Adrenal gland (tissue), 19 donors: ENCODE measurements at regions of chr12 and their contacts with region 1.

Region 1: GRCh38 chr12:1650260-1650977 is 21.4 kb downstream of the WNT5B start:
- DNase-seq: no peak
- H3K4me3 ChIP-seq: no peak overlapping the region
- H3K27ac ChIP-seq: peak overlapping the region in 3 of 5 donors; percentile 40 to 63 (median 51)
- H3K4me1 ChIP-seq: peaks cover 8 to 13% of the 10 kb centered on the region in 2 donors
- H3K27me3 ChIP-seq: no peaks in the 10 kb centered on the region
- CTCF ChIP-seq: no peak
- POLR2A ChIP-seq: no peak

Region 2: DNA sequence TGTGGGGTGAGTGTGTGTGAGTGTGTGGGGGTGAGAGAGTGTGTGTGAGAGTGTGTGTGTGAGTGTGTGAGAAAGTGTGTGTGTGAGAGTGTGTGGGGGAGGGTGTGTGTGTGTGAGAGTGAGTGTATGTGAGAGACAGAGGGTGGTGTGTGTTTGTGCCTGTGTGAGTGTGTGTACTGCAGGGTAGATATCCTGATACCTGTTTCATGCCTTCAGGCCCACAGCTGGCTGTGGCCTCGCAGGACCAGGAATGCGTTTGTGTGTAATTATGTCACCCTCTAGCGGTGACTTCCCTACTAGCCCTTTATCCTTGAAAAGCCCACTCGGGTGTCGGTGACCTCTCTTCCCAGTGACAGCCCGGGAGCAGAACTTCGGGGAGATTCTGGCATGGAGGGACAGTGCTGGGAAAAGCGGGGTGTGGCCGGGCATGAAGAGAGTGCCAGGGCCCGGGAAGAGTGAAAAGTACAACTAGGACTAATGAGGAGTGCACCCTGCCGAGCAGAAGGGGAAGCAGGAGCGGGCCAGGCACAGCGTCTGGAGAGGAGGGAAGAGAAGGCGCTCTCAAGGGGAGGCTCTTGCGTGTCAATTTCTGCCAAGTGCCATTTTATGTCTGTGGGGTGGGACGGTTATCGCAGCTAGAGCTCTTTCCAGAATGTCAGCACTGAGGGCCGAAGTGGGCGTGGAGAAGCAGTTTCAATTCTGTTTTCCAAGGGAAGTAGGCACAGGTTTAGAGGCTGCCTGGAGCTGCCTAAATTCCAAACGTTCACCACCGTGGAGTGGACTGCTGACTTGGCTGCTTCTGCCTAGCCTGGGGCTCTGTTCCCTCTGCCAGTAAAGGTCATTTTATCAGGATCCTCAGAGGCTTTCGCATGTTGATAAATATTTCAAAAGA is 45.0 kb before region 1 on chr12:
- intact Hi-C with region 1: no loop called
- DNase-seq: peak; percentile 80 to 92 (median 85)
- H3K4me3 ChIP-seq: peak overlapping the region in 3 of 4 donors; percentile 24 to 56 (median 54)
- H3K27ac ChIP-seq: peak overlapping the region; percentile 81 to 97 (median 92)
- H3K4me1 ChIP-seq: peaks cover 8 to 21% of the 10 kb centered on the region in 2 donors
- H3K27me3 ChIP-seq: no peaks in the 10 kb centered on the region
- CTCF ChIP-seq: peak; percentile 69 to 90 (median 84)
- POLR2A ChIP-seq: no peak

Region 3: GRCh38 chr12:1690578-1691122 is 40.2 kb after region 1 on chr12 and contains the start of gene ADIPOR2:
- intact Hi-C with region 1: loop called in 1 of 2 experiments (anchors 5 kb)
- DNase-seq: peak; percentile 94 to 98 (median 96)
- H3K4me3 ChIP-seq: peak within 1 kb of the TSS; percentile 40 to 99 (median 78)
- H3K27ac ChIP-seq: peak within 1 kb of the TSS; percentile 89 to 97 (median 94)
- H3K4me1 ChIP-seq: peaks cover 18 to 40% of the 10 kb centered on the region in 2 donors
- H3K27me3 ChIP-seq: no peaks in the 10 kb centered on the region
- CTCF ChIP-seq: no peak
- POLR2A ChIP-seq: peak; percentile 63 to 87
- total RNA-seq, gene ADIPOR2: 59.5 to 214 (median 116) TPM

Region 4: DNA sequence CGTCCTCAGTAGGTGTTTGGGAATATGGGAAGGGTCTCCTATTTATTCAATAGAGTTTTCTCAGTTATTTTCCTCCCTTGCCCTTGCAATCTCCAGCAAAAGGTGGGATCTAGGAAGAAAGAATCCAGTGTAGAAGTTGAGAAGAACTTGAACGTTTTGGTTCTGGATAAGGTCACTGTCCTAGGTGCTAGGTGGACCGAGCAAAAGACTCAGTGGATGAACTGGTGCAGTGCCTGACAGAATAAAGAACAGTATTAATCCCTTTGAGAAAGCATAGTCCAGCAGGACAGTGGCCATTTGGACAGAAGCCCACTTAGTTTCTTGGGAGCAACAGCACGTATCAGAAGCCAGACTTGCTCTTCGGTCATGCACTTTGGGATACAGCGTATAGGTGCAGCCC is 137.3 kb after region 1 on chr12:
- intact Hi-C with region 1: loop called (anchors 2 kb)
- DNase-seq: no peak
- H3K4me3 ChIP-seq: no peak overlapping the region
- H3K27ac ChIP-seq: no peak overlapping the region
- H3K4me1 ChIP-seq: peaks cover 0 to 10% of the 10 kb centered on the region in 2 donors
- H3K27me3 ChIP-seq: no peaks in the 10 kb centered on the region
- CTCF ChIP-seq: no peak
- POLR2A ChIP-seq: no peak

Region 5: DNA sequence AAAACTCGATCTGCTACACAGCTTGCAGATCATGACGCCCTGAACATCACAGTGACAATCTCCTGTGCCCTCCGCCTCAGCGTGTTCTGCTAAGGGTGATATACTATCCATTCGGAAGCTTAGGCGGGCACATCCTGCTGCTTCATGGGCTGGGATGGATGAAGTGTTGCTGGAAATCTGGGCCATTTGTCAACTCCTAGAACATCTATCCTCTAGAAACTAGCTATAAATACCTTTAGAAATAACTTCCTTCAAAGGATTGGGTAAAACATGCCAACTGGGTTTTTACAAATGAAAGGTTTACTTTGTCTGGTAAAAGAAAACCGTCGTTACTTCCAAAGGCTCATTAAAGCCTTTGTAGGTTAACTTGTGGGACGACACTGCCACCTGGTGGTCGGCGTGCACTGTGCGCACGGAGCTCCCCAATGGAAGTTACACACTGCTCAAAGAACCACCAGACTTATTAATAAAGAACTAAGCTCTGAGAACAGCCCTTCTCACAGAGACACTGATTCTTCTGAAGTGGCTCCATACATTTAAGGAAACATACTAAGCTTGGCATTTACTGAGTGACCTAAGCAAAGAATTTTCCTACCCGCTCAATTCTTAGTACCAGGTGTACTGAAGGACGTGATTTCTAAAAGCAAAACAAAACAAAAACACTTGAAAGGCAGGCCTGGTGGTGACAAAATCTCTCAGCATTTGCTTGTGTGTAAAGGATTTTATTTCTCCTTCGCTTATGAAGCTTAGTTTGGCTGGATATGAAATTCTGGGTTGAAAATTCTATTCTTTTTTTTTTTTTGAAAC is 289.6 kb after region 1 on chr12:
- intact Hi-C with region 1: loop called (anchors 10 kb)
- DNase-seq: peak; percentile 84 to 96 (median 89)
- H3K4me3 ChIP-seq: no peak overlapping the region
- H3K27ac ChIP-seq: peak overlapping the region in 1 of 5 donors; percentile 12
- H3K4me1 ChIP-seq: peaks cover 14 to 19% of the 10 kb centered on the region in 2 donors
- H3K27me3 ChIP-seq: no peaks in the 10 kb centered on the region
- CTCF ChIP-seq: peak; percentile 89 to 97 (median 96)
- POLR2A ChIP-seq: no peak